Esophagus squamous epithelium (tissue), 5 donors: ENCODE measurements at regions of chr3 and their contacts with region 1.

Region 1: DNA sequence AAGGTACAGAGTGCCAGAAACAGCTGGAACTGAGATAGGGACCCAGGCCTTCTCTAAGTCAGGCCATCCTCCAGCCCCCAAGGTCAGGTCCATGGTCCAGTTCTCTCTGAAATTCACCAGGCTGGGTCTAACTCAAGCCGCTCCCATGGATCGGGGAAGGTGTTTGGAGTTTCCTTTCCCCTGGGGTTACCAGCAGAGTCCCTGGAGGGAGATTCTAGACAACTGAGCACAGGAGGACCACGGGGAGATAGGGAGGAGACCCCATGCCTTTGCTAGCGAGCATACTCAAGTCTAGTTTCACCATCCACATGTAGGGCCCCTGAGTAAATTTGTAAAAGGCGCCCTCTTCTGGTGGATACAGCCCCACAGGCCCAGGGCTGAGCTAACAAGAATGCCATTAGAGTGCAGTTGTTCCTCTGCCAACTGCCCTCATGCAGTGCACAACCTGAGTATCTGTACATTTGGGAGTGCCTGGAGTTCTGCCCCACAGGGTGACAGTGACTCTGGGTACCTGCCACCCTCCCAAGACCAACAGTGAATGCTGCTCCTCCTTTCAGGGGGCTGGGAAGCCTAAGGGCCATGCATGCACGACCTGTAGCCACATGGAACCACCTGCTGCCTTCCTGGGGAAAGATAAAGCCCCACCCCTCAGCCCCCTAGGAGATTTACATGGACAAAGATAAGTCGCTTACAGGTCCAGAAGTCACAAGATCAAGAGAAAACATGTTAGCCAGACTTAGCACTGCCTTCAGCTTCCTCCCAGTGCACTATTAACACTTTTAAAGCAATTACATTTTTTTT is 89.0 kb downstream of the IQSEC1 start:
- DNase-seq: no peak
- H3K4me3 ChIP-seq: no peak overlapping the region
- H3K27ac ChIP-seq: no peak overlapping the region
- H3K4me1 ChIP-seq: peaks cover 0 to 16% (median 0%) of the 10 kb centered on the region in 3 donors
- H3K27me3 ChIP-seq: no peaks in the 10 kb centered on the region
- CTCF ChIP-seq: peak; percentile 43 to 80 (median 72)
- POLR2A ChIP-seq: no peak

Region 2: DNA sequence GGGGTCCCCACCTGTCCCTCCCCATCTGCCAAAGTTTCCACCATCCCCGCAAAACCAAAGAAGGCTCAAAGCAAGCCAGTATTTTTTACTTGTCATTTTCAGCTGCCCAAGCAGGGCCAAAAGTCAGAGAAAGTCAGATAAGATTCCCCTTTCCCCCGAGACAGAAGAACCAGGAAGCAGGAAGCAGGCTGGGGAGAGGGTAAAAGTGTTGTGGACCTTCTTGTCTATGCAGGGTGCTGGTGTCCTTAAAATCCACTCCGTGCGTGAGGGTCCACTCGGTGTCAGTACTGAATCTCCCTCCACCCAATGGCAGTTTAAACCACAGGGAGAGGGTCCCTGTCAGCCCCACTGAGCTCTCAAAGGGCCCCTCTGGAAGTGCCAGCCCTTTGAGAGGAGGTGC is 122.6 kb before region 1 on chr3:
- intact Hi-C with region 1: no loop called
- DNase-seq: no peak
- H3K4me3 ChIP-seq: no peak overlapping the region
- H3K27ac ChIP-seq: no peak overlapping the region
- H3K4me1 ChIP-seq: peaks cover 0 to 4% (median 0%) of the 10 kb centered on the region in 3 donors
- H3K27me3 ChIP-seq: no peaks in the 10 kb centered on the region
- CTCF ChIP-seq: no peak
- POLR2A ChIP-seq: no peak

Region 3: GRCh38 chr3:12875857-12876836 is 108.1 kb before region 1 on chr3:
- intact Hi-C with region 1: loop called (anchors 10 kb)
- DNase-seq: no peak
- H3K4me3 ChIP-seq: peak overlapping the region in 3 of 4 donors; percentile 19 to 57 (median 34)
- H3K27ac ChIP-seq: no peak overlapping the region
- H3K4me1 ChIP-seq: peaks cover 4 to 12% (median 6%) of the 10 kb centered on the region in 3 donors
- H3K27me3 ChIP-seq: peaks cover 0 to 19% (median 0%) of the 10 kb centered on the region in 4 donors
- CTCF ChIP-seq: peak in 2 of 6 experiments; percentile 6 to 22
- POLR2A ChIP-seq: no peak

Region 4: DNA sequence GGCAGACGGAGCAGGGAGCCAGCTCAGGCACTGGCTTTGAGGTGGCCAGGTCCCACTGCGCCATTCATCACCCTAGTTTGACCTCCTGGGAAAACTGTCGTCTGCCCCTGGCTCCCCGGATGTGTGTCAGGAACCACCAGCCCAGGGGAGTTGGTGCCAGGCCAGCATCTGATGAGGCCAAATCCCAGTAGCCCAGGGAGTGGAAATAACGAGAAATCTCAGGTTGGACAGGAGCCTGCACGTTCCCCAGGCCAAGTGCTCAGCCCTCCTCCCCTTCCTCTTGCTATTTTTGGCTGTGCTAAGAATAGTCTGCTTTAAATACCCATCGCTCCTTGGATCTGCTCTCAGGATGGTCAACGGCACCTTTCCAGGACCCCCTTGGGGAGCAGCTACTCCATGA is 49.8 kb before region 1 on chr3:
- intact Hi-C with region 1: no loop called
- DNase-seq: no peak
- H3K4me3 ChIP-seq: no peak overlapping the region
- H3K27ac ChIP-seq: peak overlapping the region in 3 of 4 donors; percentile 16 to 58 (median 36)
- H3K4me1 ChIP-seq: peaks cover 6 to 68% (median 36%) of the 10 kb centered on the region in 3 donors
- H3K27me3 ChIP-seq: no peaks in the 10 kb centered on the region
- CTCF ChIP-seq: no peak
- POLR2A ChIP-seq: no peak